Heart left ventricle (tissue), 16 donors: ENCODE measurements at regions of chrX and their contacts with region 1.

Region 1: GRCh38 chrX:153667956-153668396 is 5.6 kb downstream of the PNCK start:
- DNase-seq: peak; percentile 76 to 91 (median 85)
- ATAC-seq: peak; percentile 74 to 92 (median 88)
- H3K4me3 ChIP-seq: no peak overlapping the region
- H3K27ac ChIP-seq: peak overlapping the region in 1 of 12 donors; percentile 73
- H3K4me1 ChIP-seq: no peaks in the 10 kb centered on the region
- H3K27me3 ChIP-seq: peaks cover 0 to 22% (median 3%) of the 10 kb centered on the region in 9 donors
- CTCF ChIP-seq: peak; percentile 51 to 76 (median 70)
- POLR2A ChIP-seq: no peak

Region 2: DNA sequence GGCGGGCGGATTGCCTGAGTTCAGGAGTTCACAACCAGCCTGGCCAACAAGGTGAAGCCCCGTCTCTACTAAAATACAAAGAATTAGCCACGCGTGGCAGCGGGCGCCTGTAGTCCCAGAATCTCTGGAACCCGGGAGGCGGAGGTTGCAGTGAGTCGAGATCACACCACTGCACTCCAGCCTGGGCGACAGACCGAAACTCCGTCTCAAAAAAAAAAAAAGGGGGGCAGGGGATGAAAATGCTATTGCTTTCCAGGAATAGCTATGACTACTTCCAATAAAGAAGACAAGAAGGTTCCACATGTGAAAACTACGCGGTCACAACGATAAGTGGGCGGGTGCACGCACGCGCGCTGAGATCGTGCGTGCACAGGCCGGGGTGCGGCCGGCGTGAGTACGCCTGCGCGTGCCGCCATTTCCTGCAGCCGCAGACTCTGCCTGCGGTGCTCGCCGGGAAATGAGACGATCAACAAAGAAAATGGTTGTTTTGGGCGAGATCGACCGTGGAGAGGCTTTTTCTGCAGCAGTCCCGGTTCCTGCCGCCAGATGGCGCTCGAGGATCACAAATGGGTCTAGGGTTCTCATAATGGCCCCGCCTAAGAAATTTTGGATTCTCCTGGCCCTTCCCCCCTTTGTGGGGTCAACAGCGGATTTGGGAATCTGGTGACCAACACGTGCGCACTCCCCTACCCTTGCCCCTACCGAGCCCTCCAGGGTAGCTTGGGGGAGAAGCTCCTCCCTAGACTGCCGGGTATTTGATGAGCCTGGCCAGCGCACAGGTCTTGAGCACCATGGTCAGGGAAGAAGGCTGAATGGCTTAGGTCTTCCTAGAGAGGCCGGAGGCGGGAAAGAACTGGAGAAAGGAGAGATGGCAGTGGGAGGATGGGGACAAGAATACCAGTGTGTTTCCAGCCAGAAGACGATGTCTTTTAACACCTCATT is 709.2 kb before region 1 on chrX:
- intact Hi-C with region 1: loop called in 2 of 10 experiments (anchors 5 kb)
- DNase-seq: peak; percentile 85 to 92 (median 88)
- ATAC-seq: peak; percentile 92 to 99 (median 98)
- H3K4me3 ChIP-seq: peak overlapping the region in 10 of 12 donors; percentile 19 to 51 (median 39)
- H3K27ac ChIP-seq: peak overlapping the region in 8 of 12 donors; percentile 47 to 74 (median 55)
- H3K4me1 ChIP-seq: peaks cover 0 to 8% (median 0%) of the 10 kb centered on the region in 12 donors
- H3K27me3 ChIP-seq: peaks cover 0 to 4% (median 0%) of the 10 kb centered on the region in 9 donors
- CTCF ChIP-seq: peak; percentile 71 to 92 (median 80)
- POLR2A ChIP-seq: no peak

Region 3: GRCh38 chrX:153460845-153461244 is 207.1 kb before region 1 on chrX:
- intact Hi-C with region 1: no loop called
- DNase-seq: peak in 4 of 5 donors; percentile 25 to 64 (median 40)
- ATAC-seq: peak in 1 of 4 donors; percentile 45
- H3K4me3 ChIP-seq: no peak overlapping the region
- H3K27ac ChIP-seq: no peak overlapping the region
- H3K4me1 ChIP-seq: peaks cover 0 to 6% (median 0%) of the 10 kb centered on the region in 12 donors
- H3K27me3 ChIP-seq: no peaks in the 10 kb centered on the region
- CTCF ChIP-seq: peak; percentile 32 to 62 (median 46)
- POLR2A ChIP-seq: no peak

Region 4: DNA sequence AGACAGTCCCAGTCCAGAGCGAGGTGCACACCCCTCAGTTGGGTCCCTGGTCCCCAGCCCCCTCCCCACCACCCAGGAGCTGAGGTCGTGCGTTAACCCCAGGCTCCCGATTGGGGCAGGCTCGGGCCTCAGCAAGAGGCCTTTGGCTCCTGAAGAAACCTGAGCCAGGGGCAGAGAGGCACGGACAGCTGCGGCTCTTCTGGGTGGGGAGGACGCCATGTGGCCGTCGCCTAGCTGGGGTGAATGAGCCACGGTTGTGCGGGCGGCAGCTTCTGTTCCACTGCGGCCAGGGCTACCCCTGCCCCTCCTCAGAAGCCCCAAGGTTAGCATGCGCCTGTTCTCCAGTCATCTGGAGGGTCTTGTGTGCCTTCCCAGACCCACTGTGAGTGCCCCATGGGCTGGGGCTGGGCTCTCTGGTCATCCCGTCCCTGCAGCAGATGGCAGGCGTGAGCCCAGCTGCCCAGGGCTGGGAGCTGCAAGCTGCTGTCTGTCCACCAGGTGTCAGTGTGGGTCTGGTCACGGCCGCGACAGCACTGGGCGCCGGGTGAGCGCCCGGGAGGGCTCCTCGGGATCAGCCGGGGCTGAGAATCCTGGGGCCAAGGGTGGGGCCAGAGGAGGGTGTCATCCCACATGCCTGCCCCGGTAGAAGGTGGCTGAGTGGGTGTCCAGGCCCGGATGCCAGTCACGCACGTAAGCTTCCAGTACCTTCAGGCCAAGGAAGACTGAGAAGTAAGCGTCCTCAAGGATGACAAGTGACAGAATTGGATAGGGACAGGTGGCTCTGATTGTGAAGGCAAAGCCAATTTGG is 128.6 kb before region 1 on chrX:
- intact Hi-C with region 1: loop called in 2 of 10 experiments (anchors 2 to 5 kb)
- DNase-seq: peak; percentile 45 to 84 (median 73)
- ATAC-seq: peak; percentile 68 to 91 (median 86)
- H3K4me3 ChIP-seq: no peak overlapping the region
- H3K27ac ChIP-seq: no peak overlapping the region
- H3K4me1 ChIP-seq: peaks cover 0 to 3% (median 0%) of the 10 kb centered on the region in 12 donors
- H3K27me3 ChIP-seq: peaks cover 0 to 11% (median 0%) of the 10 kb centered on the region in 9 donors
- CTCF ChIP-seq: peak; percentile 61 to 91 (median 76)
- POLR2A ChIP-seq: no peak

Region 5: GRCh38 chrX:153599192-153600031 is 68.6 kb before region 1 on chrX:
- intact Hi-C with region 1: loop called in 2 of 10 experiments (anchors 10 kb)
- DNase-seq: peak; percentile 87 to 95 (median 92)
- ATAC-seq: peak; percentile 89 to 99 (median 94)
- H3K4me3 ChIP-seq: peak overlapping the region; percentile 29 to 87 (median 68)
- H3K27ac ChIP-seq: peak overlapping the region in 10 of 12 donors; percentile 57 to 84 (median 70)
- H3K4me1 ChIP-seq: peaks cover 0 to 24% (median 6%) of the 10 kb centered on the region in 12 donors
- H3K27me3 ChIP-seq: no peaks in the 10 kb centered on the region
- CTCF ChIP-seq: peak in 1 of 12 donors; percentile 3
- POLR2A ChIP-seq: no peak

Region 6: DNA sequence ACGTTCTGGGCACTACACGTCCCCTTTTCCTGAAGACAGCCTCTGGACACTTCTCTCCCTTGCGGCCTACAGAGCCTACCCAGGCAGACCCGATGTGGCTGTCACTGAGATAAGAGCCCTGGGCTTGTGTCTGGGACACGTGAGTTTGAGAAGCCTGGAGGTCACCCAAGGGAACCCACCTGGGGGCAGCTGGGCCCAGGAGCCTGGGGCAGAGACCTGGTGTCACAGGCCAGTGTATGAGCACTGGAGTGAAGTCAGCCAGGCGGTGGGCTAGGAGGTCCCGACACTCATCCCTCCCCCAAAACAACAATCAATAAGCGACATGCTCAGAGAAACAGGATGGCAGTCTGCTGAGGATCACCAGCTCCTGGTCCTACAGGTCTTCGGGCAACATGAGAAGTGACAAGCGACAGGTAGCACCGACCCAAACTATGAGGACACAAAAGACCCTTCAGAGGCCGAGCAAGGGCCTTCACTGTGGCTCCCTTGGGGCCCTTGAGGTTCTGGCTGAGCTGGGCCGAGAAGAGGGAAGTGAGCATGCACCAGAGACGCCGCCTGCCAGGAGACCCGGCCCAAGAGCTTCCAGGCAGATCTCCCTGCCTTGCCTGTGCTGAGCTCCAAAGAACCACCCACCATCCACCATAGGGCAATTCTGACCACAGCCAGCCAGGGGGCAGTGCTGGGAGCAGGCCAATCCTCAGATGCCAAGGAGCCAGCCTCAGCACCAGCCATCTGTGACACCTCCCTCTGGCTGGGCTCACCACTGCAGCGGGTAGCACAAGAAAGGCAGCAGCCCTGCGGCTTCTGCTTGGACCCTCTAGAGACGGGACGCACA is 32.0 kb before region 1 on chrX:
- intact Hi-C with region 1: loop called in 1 of 10 experiments (anchors 5 kb)
- DNase-seq: peak in 1 of 5 donors; percentile 22
- ATAC-seq: peak in 1 of 4 donors; percentile 42
- H3K4me3 ChIP-seq: no peak overlapping the region
- H3K27ac ChIP-seq: no peak overlapping the region
- H3K4me1 ChIP-seq: peaks cover 0 to 6% (median 0%) of the 10 kb centered on the region in 12 donors
- H3K27me3 ChIP-seq: peaks cover 0 to 19% (median 0%) of the 10 kb centered on the region in 9 donors
- CTCF ChIP-seq: peak in 4 of 12 donors; percentile 8 to 20 (median 12)
- POLR2A ChIP-seq: no peak